ENCODE measurements at regions of chr4 and their contacts with region 1.

Region 1: GRCh38 chr4:165425629-165426028 is 46.8 kb downstream of the CPE start:
- DNase-seq: no peak
- ATAC-seq: no peak
- H3K4me3 ChIP-seq: no peak overlapping the region
- H3K27ac ChIP-seq: no peak overlapping the region
- H3K4me1 ChIP-seq: no peaks in the 10 kb centered on the region
- H3K27me3 ChIP-seq: no peaks in the 10 kb centered on the region

Region 2: DNA sequence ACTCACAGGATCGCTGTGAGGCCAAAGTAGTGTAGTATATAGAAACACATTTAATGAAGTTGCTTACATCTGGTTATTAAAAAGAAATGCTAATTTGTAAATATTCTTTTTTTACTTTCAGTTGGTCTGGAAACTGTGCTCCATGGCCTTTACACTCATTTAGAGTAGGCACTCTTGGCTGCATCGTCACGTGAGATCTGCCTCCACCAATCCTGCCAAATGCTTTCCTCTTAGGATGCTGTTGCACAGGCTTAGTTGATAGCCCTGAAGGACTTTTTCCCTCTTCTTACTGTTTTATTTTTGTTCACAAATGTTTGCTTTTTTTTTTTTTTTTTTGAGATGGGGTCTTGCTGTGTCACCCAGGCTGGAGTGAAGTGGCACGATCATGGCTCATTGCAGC is 40.5 kb before region 1 on chr4:
- intact Hi-C with region 1: loop called in 1 of 2 experiments (anchors 5 kb)
- DNase-seq: no peak
- ATAC-seq: no peak
- H3K4me3 ChIP-seq: no peak overlapping the region
- H3K27ac ChIP-seq: no peak overlapping the region
- H3K4me1 ChIP-seq: peaks cover 2 to 11% of the 10 kb centered on the region in 2 donors
- H3K27me3 ChIP-seq: no peaks in the 10 kb centered on the region

Region 3: GRCh38 chr4:165563851-165564250 is 138.2 kb after region 1 on chr4:
- intact Hi-C with region 1: no loop called
- DNase-seq: no peak
- ATAC-seq: no peak
- H3K4me3 ChIP-seq: no peak overlapping the region
- H3K27ac ChIP-seq: no peak overlapping the region
- H3K4me1 ChIP-seq: peaks cover 0 to 2% of the 10 kb centered on the region in 2 donors
- H3K27me3 ChIP-seq: no peaks in the 10 kb centered on the region

Measured in aorta (tissue), 5 donors.